HAP-1 (cell line): ENCODE measurements at regions of chr10 and their contacts with region 1.

Region 1: DNA sequence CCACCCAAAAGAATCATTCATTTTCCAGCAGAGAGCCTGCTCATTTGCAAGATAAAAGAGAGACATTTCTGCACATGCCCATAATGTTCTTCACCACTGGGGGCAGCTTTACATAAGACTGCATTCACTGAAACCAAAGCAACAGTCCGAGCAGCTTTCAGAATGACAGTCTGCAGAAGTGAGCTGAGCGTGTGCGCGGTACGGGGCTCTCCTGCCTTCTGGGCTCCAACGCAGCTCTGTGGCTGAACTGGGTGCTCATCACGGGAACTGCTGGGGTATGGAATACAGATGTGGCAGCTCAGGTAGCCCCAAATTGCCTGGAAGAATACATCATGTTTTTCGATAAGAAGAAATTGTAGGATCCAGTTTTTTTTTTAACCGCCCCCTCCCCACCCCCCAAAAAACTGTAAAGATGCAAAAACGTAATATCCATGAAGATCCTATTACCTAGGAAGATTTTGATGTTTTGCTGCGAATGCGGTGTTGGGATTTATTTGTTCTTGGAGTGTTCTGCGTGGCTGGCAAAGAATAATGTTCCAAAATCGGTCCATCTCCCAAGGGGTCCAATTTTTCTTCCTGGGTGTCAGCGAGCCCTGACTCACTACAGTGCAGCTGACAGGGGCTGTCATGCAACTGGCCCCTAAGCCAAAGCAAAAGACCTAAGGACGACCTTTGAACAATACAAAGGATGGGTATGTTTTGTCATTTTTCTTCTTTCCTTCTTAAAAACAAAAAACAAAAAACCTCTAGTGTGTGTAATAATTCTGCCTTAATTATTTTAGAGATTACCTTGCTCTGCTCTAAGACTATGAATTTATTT is at the start of gene LRRTM3:
- DNase-seq: peak; percentile 87 to 97
- H3K4me3 ChIP-seq: peak within 1 kb of the TSS; percentile 38
- H3K4me1 ChIP-seq: peaks cover 25% of the 10 kb centered on the region
- H3K27me3 ChIP-seq: no peaks in the 10 kb centered on the region

Region 2: GRCh38 chr10:66604195-66604594 is 321.9 kb before region 1 on chr10:
- in situ Hi-C with region 1: no loop called
- DNase-seq: peak in 1 of 2 experiments; percentile 21
- H3K4me3 ChIP-seq: no peak overlapping the region
- H3K4me1 ChIP-seq: no peaks in the 10 kb centered on the region
- H3K27me3 ChIP-seq: no peaks in the 10 kb centered on the region

Region 3: DNA sequence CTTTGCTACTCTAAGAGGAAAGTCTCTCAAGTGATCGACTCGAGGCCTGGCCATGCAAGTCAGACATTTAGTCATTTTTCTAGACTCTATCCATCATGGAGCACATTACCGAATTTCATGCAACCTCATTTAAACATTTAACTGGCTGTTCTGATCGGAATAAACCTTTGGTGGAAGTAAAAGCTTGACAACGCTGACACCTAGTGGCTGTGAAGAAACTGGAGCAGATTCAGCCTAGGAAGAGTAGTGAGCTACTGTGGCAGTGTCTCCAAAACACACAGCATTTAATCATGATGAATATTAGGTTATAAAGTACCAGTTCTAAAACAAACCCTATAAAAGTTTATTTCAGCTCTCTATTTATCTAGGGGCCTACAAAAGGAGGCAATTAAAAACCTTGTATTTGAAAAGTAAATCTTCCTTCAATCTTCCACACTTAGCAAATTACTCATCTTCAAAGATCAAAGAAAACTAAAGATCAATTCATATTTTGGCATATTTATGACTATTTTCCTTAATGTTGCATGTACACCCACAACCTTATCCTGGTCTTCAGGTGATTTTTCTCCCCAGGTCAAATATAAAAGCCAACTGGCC is 594.9 kb after region 1 on chr10:
- in situ Hi-C with region 1: loop called (anchors 25 kb)
- DNase-seq: peak; percentile 63
- H3K4me3 ChIP-seq: no peak overlapping the region
- H3K4me1 ChIP-seq: peaks cover 9% of the 10 kb centered on the region
- H3K27me3 ChIP-seq: no peaks in the 10 kb centered on the region